Cardiac septum (tissue), 1 donor: ENCODE measurements at regions of chr5 and their contacts with region 1.

Region 1: GRCh38 chr5:90434116-90434714 is 24.7 kb upstream of the CETN3 start:
- DNase-seq: no peak

Region 2: GRCh38 chr5:90128551-90128950 is 305.7 kb before region 1 on chr5:
- intact Hi-C with region 1: no loop called
- DNase-seq: no peak

Region 3: GRCh38 chr5:90606539-90606938 is 172.3 kb after region 1 on chr5:
- intact Hi-C with region 1: loop called (anchors 10 kb)
- DNase-seq: no peak

Region 4: GRCh38 chr5:90783460-90784333 is 349.5 kb after region 1 on chr5:
- intact Hi-C with region 1: loop called (anchors 5 kb)
- DNase-seq: no peak